ENCODE measurements at regions of chr20 and their contacts with region 1.

Region 1: DNA sequence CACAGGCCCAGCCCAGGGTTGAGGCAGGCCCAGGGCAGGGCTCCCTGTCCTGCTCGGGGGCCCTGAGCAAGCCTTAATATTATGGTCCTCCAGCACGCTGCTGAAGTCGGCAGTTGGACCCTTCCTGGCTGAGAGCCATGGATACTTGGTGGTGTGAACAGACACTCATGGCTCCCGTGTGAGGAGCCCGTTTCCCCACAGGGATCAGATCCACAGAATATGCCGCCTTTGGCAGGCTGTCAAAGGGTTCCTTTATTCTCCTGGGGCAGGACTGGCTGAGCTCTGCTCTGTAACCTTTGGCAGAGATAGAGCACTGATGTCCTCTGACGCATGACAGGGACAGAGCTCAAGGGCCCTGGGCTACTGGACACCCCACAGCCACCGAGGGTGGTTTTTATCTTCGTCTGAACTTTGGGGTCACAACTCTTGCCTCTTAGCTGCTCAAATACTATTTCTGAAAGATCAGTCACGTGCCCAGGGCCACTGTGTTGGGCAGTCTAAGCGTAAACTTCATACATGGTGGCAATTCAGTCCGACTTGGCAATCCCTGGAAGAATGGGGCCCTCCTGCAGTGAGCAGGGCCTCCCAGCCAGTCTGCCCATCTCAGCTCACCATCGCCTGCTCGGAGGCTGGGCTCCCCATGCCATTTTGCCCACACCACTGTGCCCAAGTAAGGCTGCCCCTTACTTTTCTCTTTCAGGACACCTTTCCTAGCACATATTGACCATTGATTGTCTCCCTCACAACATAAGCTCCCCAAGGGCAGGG is 49.1 kb downstream of the TTI1 start:
- DNase-seq: peak; percentile 63
- ATAC-seq: peak; percentile 51

Region 2: GRCh38 chr20:37901654-37902503 is 82.3 kb before region 1 on chr20:
- intact Hi-C with region 1: loop called (anchors 5 kb)
- DNase-seq: no peak
- ATAC-seq: peak; percentile 63

Measured in Right ventricle myocardium superior (tissue), 1 donor.